ENCODE measurements at regions of chr9 and their contacts with region 1.

Region 1: DNA sequence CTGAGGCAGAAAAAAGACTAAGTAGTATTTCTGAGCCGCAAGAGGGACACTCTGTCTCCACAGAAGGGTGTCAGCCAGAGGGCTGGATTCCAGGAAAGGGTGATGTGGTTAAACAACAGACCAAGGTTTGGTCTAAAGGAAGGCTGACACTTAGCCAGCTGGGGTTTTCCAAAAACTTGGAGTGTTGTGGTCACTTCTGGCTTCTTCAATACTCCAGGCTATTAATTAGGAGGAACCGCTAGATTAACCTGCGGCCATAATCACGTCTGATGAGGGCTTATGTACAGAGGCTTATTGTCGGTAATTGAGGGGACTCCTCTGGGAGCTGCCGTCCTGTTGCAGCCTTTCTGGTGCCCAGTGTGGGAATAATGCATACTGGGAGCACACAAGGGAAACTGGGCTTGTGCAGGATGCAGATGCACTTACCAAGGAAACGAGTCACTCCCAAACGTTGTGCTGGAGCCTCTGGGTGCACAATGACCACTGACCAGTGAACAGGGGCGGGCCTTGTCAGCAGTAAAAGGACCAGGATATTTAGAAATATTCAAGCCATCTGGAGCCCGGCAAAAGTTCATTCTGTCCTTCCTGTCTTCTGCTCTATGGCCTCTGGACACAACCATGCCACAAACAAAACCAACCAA is 70.2 kb upstream of the TUT7 start:
- DNase-seq: no peak
- H3K4me3 ChIP-seq: no peak overlapping the region
- H3K27ac ChIP-seq: no peak overlapping the region
- H3K4me1 ChIP-seq: no peaks in the 10 kb centered on the region
- H3K27me3 ChIP-seq: no peaks in the 10 kb centered on the region
- CTCF ChIP-seq: no peak
- EP300 ChIP-seq: no peak
- POLR2A ChIP-seq: no peak

Region 2: GRCh38 chr9:86445671-86446070 is 21.3 kb after region 1 on chr9:
- in situ Hi-C with region 1: no loop called
- intact Hi-C with region 1: loop called (anchors 1 kb)
- DNase-seq: no peak
- H3K4me3 ChIP-seq: no peak overlapping the region
- H3K27ac ChIP-seq: no peak overlapping the region
- H3K4me1 ChIP-seq: no peaks in the 10 kb centered on the region
- H3K27me3 ChIP-seq: no peaks in the 10 kb centered on the region
- CTCF ChIP-seq: no peak
- EP300 ChIP-seq: no peak
- POLR2A ChIP-seq: no peak